Posterior cingulate gyrus (tissue), 11 donors: ENCODE measurements at regions of chr17 and their contacts with region 1.

Region 1: GRCh38 chr17:60256174-60256573 is 106.4 kb downstream of the CA4 start:
- DNase-seq: no peak

Region 2: GRCh38 chr17:60305141-60305540 is 49.0 kb after region 1 on chr17:
- intact Hi-C with region 1: loop called (anchors 10 kb)
- DNase-seq: peak in 3 of 10 donors; percentile 25 to 76 (median 39)